K562 (cell line): ENCODE measurements at regions of chr15 and their contacts with region 1.

Region 1: GRCh38 chr15:65304389-65305144 is at the start of gene RNU5B-1:
- DNase-seq: peak; percentile 76 to 93 (median 80)
- ATAC-seq: peak; percentile 92
- H3K4me3 ChIP-seq: peak within 1 kb of the TSS; percentile 28
- H3K27ac ChIP-seq: peak within 1 kb of the TSS; percentile 93
- H3K4me1 ChIP-seq: peaks cover 14 to 15% of the 10 kb centered on the region in 2 experiments
- H3K27me3 ChIP-seq: no peaks in the 10 kb centered on the region
- CTCF ChIP-seq: peak; percentile 72 to 92 (median 88)
- EP300 ChIP-seq: peak; percentile 72
- POLR2A ChIP-seq: peak; percentile 100
- RAD21 ChIP-seq: peak; percentile 5 to 27; a peak in 3 of 4 replicates
- polyA plus RNA-seq, gene RNU5B-1: not detected

Region 2: GRCh38 chr15:65020419-65020818 is 284.1 kb before region 1 on chr15:
- CTCF ChIA-PET with region 1: no interaction called
- POLR2A ChIA-PET with region 1: no interaction called
- in situ Hi-C with region 1: no loop called
- intact Hi-C with region 1: no loop called
- DNase-seq: peak in 2 of 4 experiments; percentile 15 to 17
- ATAC-seq: peak; percentile 72
- H3K4me3 ChIP-seq: no peak overlapping the region
- H3K27ac ChIP-seq: no peak overlapping the region
- H3K4me1 ChIP-seq: no peaks in the 10 kb centered on the region
- H3K27me3 ChIP-seq: no peaks in the 10 kb centered on the region
- CTCF ChIP-seq: no peak
- EP300 ChIP-seq: no peak
- POLR2A ChIP-seq: no peak
- RAD21 ChIP-seq: no peak

Region 3: GRCh38 chr15:65192016-65192415 is 112.6 kb before region 1 on chr15:
- CTCF ChIA-PET with region 1: interaction called, 9 read pairs
- POLR2A ChIA-PET with region 1: interaction called, 99 read pairs
- in situ Hi-C with region 1: loop called (anchors 5 kb)
- intact Hi-C with region 1: loop called (anchors 2 kb)
- DNase-seq: peak in 2 of 4 experiments; percentile 22 to 62
- ATAC-seq: peak; percentile 67
- H3K4me3 ChIP-seq: no peak overlapping the region
- H3K27ac ChIP-seq: no peak overlapping the region
- H3K4me1 ChIP-seq: peaks cover 2 to 6% of the 10 kb centered on the region in 2 experiments; a peak in 2 of 5 replicates
- H3K27me3 ChIP-seq: peaks cover 0 to 4% of the 10 kb centered on the region in 2 experiments; a peak in 2 of 5 replicates
- CTCF ChIP-seq: no peak
- EP300 ChIP-seq: no peak
- POLR2A ChIP-seq: no peak
- RAD21 ChIP-seq: no peak

Region 4: GRCh38 chr15:65258375-65259262 is 45.9 kb before region 1 on chr15:
- CTCF ChIA-PET with region 1: no interaction called
- POLR2A ChIA-PET with region 1: interaction called, 12 read pairs
- in situ Hi-C with region 1: no loop called
- intact Hi-C with region 1: no loop called
- DNase-seq: no peak
- ATAC-seq: no peak
- H3K4me3 ChIP-seq: no peak overlapping the region
- H3K27ac ChIP-seq: no peak overlapping the region
- H3K4me1 ChIP-seq: no peaks in the 10 kb centered on the region; a peak in 2 of 5 replicates
- H3K27me3 ChIP-seq: no peaks in the 10 kb centered on the region
- CTCF ChIP-seq: no peak
- EP300 ChIP-seq: no peak
- POLR2A ChIP-seq: no peak
- RAD21 ChIP-seq: no peak

Region 5: DNA sequence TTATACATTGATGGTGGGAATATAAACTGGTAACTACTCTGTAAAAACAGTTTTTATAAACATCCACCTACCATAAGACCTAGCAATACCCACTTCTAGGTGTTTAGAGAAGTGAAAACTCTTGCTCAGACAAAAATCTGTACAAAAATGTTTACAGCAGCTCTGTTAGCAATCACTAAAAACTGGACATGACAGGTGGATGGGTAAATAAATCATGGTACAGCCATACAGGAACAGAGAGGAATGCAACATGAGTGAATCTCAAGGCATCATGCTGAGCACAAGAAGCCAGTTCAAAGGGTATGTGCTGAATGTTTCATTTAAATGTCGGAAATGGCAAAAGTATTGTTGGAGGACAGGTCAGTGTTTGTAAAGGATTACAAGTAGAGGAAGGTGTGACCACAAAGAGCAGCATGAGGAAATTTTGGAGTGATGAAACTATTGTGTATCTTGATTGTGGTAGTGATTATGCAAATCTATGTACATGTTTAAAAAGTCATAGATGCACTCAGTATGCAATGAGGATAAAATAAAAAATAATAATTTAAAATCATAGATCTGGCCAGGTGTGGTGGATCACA is 11.5 kb before region 1 on chr15:
- CTCF ChIA-PET with region 1: no interaction called
- POLR2A ChIA-PET with region 1: interaction called, 91 read pairs
- in situ Hi-C with region 1: no loop called
- intact Hi-C with region 1: loop called (anchors 1 kb)
- DNase-seq: no peak
- ATAC-seq: no peak
- H3K4me3 ChIP-seq: no peak overlapping the region
- H3K27ac ChIP-seq: no peak overlapping the region
- H3K4me1 ChIP-seq: peaks cover 7 to 15% of the 10 kb centered on the region in 2 experiments; a peak in 4 of 5 replicates
- H3K27me3 ChIP-seq: no peaks in the 10 kb centered on the region
- CTCF ChIP-seq: no peak
- EP300 ChIP-seq: no peak
- POLR2A ChIP-seq: no peak
- RAD21 ChIP-seq: no peak

Region 6: GRCh38 chr15:65349338-65349737 is 44.8 kb after region 1 on chr15:
- CTCF ChIA-PET with region 1: no interaction called
- POLR2A ChIA-PET with region 1: interaction called, 10 read pairs
- in situ Hi-C with region 1: no loop called
- intact Hi-C with region 1: no loop called
- DNase-seq: no peak
- ATAC-seq: no peak
- H3K4me3 ChIP-seq: no peak overlapping the region
- H3K27ac ChIP-seq: no peak overlapping the region
- H3K4me1 ChIP-seq: no peaks in the 10 kb centered on the region
- H3K27me3 ChIP-seq: peaks cover 8 to 10% of the 10 kb centered on the region in 2 experiments; a peak in 2 of 5 replicates
- CTCF ChIP-seq: no peak
- EP300 ChIP-seq: no peak
- POLR2A ChIP-seq: no peak
- RAD21 ChIP-seq: no peak

Region 7: GRCh38 chr15:65395567-65396185 is 91.1 kb after region 1 on chr15:
- CTCF ChIA-PET with region 1: no interaction called
- POLR2A ChIA-PET with region 1: interaction called, 24 read pairs
- in situ Hi-C with region 1: no loop called
- intact Hi-C with region 1: no loop called
- DNase-seq: no peak
- ATAC-seq: no peak
- H3K4me3 ChIP-seq: no peak overlapping the region
- H3K27ac ChIP-seq: no peak overlapping the region
- H3K4me1 ChIP-seq: peaks cover 0 to 11% of the 10 kb centered on the region in 2 experiments; a peak in 3 of 5 replicates
- H3K27me3 ChIP-seq: peaks cover 47 to 79% of the 10 kb centered on the region in 2 experiments
- CTCF ChIP-seq: no peak
- EP300 ChIP-seq: no peak
- POLR2A ChIP-seq: no peak
- RAD21 ChIP-seq: no peak